ENCODE measurements at regions of chr3 and their contacts with region 1.

Region 1: DNA sequence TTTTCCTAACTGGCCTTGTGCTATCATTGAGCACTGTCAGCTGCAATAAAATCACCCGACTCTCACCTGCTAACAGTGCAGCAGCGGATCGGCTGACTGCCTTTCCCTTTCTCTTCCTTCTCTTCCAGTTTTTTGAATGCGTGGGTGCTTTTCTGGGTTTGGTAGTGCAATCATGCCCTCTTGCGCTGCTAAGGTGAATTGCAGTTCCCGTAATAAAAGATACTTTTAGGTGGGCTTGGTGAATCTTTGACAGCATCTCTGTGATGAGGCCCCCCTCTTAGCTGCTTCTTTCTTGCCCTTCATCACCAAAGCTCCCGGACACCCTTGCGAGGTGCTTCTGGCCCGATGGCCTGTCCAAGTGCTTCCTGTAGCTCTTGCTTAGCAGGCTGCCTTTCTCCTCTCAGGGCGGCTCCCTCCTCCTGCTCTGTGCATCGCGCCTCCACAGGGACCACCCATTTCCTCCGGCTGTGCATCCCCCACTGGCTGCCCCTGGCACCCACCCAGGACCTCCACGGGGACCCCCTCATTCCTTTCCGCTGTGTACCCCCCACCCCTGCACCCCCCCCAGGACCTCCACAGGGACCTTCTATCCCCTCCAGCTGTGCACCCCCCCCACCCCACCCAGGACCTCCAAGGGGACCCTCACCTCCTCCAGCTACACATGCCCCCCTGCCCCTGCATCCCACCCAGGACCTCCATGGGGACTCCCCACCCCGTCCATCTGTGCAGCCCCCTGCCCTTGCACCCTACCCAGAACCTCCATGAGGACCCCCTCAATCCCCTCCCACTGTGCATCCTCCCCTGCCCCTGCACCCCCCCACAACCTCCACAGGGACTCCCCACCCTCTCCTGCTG is 50.8 kb upstream of the RPL32 start:
- DNase-seq: peak; percentile 70 to 81 (median 73)
- ATAC-seq: peak; percentile 60
- H3K4me3 ChIP-seq: no peak overlapping the region
- H3K27ac ChIP-seq: no peak overlapping the region
- H3K4me1 ChIP-seq: peaks cover 9 to 20% of the 10 kb centered on the region in 2 experiments; a peak in 3 of 5 replicates
- H3K27me3 ChIP-seq: no peaks in the 10 kb centered on the region
- CTCF ChIP-seq: peak; percentile 94 to 98 (median 98)
- EP300 ChIP-seq: no peak
- POLR2A ChIP-seq: no peak
- RAD21 ChIP-seq: peak; percentile 98 to 99

Region 2: DNA sequence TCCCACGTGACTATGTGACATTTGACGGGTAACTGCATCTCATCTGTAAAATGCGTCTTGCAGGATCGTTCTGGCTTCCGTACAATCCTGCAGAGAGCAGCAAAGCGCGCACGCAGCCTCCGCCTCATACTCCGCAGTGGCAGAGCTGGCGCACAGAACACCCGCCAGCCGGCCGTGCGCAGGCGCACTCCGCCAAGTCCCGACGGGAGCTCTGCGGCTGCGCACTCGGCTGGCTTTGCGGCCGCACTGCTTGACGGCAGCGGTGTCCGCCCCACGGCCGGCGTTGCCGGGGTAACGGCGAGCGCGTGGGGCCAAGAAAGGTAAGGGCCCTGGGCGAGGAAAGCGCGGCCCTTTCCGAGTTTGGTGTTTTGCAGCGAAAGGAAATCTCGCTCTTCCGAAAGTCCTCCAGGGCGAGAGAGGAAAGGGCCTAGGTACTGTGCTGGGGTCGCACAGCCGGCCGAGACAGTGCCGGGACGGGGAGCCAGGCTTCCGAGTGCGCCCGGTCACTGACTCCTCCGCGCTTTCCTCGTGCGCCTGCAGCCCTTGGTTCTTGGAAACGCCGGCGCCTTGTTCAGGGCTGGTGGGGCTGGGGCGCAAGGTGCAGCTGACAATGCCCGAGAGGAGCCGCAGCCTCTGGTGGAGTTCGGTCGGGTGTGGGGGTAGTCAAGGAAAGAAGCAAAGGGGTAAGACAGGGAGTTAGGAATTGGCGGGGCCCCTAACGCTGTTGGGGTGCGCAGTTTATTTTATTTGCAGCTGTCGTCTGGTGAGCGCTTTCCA is 407.8 kb before region 1 on chr3 and contains the start of gene TSEN2:
- CTCF ChIA-PET with region 1: interaction called, 3 read pairs
- POLR2A ChIA-PET with region 1: no interaction called
- in situ Hi-C with region 1: no loop called
- intact Hi-C with region 1: loop called (anchors 2 kb)
- DNase-seq: peak; percentile 98 to 100 (median 100)
- ATAC-seq: peak; percentile 96
- H3K4me3 ChIP-seq: peak within 1 kb of the TSS; percentile 82
- H3K27ac ChIP-seq: peak within 1 kb of the TSS; percentile 84
- H3K4me1 ChIP-seq: peaks cover 19 to 22% of the 10 kb centered on the region in 2 experiments
- H3K27me3 ChIP-seq: peaks cover 0 to 5% of the 10 kb centered on the region in 2 experiments; a peak in 2 of 5 replicates
- CTCF ChIP-seq: peak; percentile 46 to 57 (median 55)
- EP300 ChIP-seq: peak; percentile 6; the same call in 1 of the 2 replicates
- POLR2A ChIP-seq: peak; percentile 94
- RAD21 ChIP-seq: peak in 1 of 2 experiments; percentile 62; a peak in 3 of 4 replicates
- polyA plus RNA-seq, gene TSEN2: 39.3 to 76.3 TPM

Region 3: DNA sequence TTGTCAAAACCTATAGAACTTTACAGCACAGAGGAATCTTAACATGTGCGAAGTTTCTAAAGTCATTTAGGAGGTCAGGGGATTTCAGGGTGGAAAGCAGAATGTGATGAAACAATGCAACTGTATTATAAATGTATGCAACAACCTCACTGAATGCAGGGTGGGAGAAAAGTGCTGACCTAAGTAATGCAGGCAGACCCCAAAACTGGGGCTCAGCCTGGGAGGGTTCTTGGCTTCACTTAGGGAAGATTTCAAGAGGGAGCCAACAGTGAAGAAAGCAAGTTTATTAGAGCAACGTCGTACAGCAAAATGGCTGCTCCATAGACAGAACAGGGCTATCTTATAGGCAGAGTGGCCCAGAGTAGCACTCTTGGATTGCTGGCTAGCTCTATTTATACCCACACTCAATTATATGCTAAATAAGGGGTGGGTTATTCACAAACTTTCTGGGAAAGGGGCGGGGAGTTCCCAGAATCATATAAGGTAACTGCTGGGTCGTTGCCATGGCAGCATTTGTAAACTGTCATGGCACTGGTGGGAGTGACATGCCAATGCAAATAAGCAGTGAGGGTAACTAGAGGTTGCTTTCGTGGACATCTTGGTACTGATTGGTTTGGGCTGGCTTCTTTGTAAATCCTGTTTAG is 109.9 kb before region 1 on chr3:
- CTCF ChIA-PET with region 1: interaction called, 3 read pairs
- POLR2A ChIA-PET with region 1: no interaction called
- in situ Hi-C with region 1: no loop called
- intact Hi-C with region 1: loop called (anchors 2 kb)
- DNase-seq: peak in 2 of 4 experiments; percentile 60 to 82
- ATAC-seq: peak; percentile 95
- H3K4me3 ChIP-seq: no peak overlapping the region
- H3K27ac ChIP-seq: no peak overlapping the region
- H3K4me1 ChIP-seq: peaks cover 0 to 10% of the 10 kb centered on the region in 2 experiments; a peak in 3 of 5 replicates
- H3K27me3 ChIP-seq: peaks cover 0 to 4% of the 10 kb centered on the region in 2 experiments; a peak in 1 of 5 replicates
- CTCF ChIP-seq: no peak
- EP300 ChIP-seq: no peak; the same call in 1 of the 2 replicates
- POLR2A ChIP-seq: peak; percentile 48; the same call in 1 of the 2 replicates
- RAD21 ChIP-seq: no peak

Region 4: DNA sequence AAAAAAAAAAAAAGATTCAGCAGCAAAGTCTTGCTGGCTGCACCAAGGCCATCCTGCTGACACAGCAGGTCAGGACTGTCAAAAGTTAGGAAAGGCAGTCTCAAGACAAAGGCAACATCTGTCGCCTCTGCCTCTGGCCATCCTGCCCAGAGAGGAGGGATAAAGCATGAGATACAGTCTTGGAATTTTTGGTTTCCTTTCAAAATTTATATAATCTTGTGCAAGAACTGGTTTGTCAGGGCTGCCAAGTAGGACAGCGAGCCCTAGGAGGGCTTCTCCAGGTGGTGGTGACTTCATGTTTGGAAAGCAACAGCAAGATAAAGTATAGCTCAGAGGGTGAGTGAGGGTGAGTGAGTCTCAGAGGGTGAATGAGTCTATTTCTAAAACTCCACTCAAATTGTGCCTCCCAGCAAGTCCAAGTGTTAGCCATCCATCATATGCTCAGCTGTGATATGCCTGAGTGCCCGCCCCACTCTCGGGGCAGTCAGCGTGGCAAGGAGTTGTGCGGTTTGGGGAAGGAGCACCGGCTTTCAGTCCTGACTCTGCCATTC is 38.9 kb before region 1 on chr3:
- CTCF ChIA-PET with region 1: no interaction called
- POLR2A ChIA-PET with region 1: interaction called, 4 read pairs
- in situ Hi-C with region 1: no loop called
- intact Hi-C with region 1: loop called (anchors 5 kb)
- DNase-seq: no peak
- ATAC-seq: no peak
- H3K4me3 ChIP-seq: no peak overlapping the region
- H3K27ac ChIP-seq: no peak overlapping the region
- H3K4me1 ChIP-seq: no peaks in the 10 kb centered on the region; a peak in 1 of 5 replicates
- H3K27me3 ChIP-seq: peaks cover 41 to 53% of the 10 kb centered on the region in 2 experiments
- CTCF ChIP-seq: no peak
- EP300 ChIP-seq: no peak
- POLR2A ChIP-seq: no peak
- RAD21 ChIP-seq: no peak

Region 5: GRCh38 chr3:12984023-12984823 is 92.0 kb after region 1 on chr3:
- CTCF ChIA-PET with region 1: interaction called, 7 read pairs
- POLR2A ChIA-PET with region 1: interaction called, 3 read pairs
- in situ Hi-C with region 1: loop called (anchors 5 kb)
- intact Hi-C with region 1: loop called (anchors 1 kb)
- DNase-seq: peak; percentile 82 to 93 (median 86)
- ATAC-seq: peak; percentile 98
- H3K4me3 ChIP-seq: no peak overlapping the region
- H3K27ac ChIP-seq: peak overlapping the region; percentile 57
- H3K4me1 ChIP-seq: peaks cover 19 to 53% of the 10 kb centered on the region in 2 experiments; a peak in 4 of 5 replicates
- H3K27me3 ChIP-seq: no peaks in the 10 kb centered on the region
- CTCF ChIP-seq: peak; percentile 93 to 98 (median 95)
- EP300 ChIP-seq: peak; percentile 20; the same call in 1 of the 2 replicates
- POLR2A ChIP-seq: no peak
- RAD21 ChIP-seq: peak; percentile 89 to 96

Region 6: GRCh38 chr3:13332158-13332557 is 439.9 kb after region 1 on chr3:
- CTCF ChIA-PET with region 1: no interaction called
- POLR2A ChIA-PET with region 1: no interaction called
- in situ Hi-C with region 1: no loop called
- intact Hi-C with region 1: no loop called
- DNase-seq: no peak
- ATAC-seq: no peak
- H3K4me3 ChIP-seq: no peak overlapping the region
- H3K27ac ChIP-seq: no peak overlapping the region
- H3K4me1 ChIP-seq: 0 out of 5 replicates have a peak, but pooled peaks cover 0 to 4% of the 10 kb centered on the region in 2 experiments
- H3K27me3 ChIP-seq: no peaks in the 10 kb centered on the region
- CTCF ChIP-seq: no peak
- EP300 ChIP-seq: no peak
- POLR2A ChIP-seq: no peak
- RAD21 ChIP-seq: no peak